ENCODE measurements at regions of chr11 and their contacts with region 1.

Region 1: GRCh38 chr11:46977038-46977813 is 40.7 kb downstream of the CSTPP1 start:
- DNase-seq: no peak
- H3K4me3 ChIP-seq: no peak overlapping the region
- H3K27ac ChIP-seq: no peak overlapping the region
- H3K4me1 ChIP-seq: peaks cover 13% of the 10 kb centered on the region
- CTCF ChIP-seq: no peak

Region 2: GRCh38 chr11:46966773-46967172 is 10.5 kb before region 1 on chr11:
- CTCF ChIA-PET with region 1: no interaction called
- POLR2A ChIA-PET with region 1: interaction called, 15 read pairs
- intact Hi-C with region 1: no loop called
- DNase-seq: no peak
- H3K4me3 ChIP-seq: no peak overlapping the region
- H3K27ac ChIP-seq: no peak overlapping the region
- H3K4me1 ChIP-seq: no peaks in the 10 kb centered on the region
- CTCF ChIP-seq: no peak

Region 3: DNA sequence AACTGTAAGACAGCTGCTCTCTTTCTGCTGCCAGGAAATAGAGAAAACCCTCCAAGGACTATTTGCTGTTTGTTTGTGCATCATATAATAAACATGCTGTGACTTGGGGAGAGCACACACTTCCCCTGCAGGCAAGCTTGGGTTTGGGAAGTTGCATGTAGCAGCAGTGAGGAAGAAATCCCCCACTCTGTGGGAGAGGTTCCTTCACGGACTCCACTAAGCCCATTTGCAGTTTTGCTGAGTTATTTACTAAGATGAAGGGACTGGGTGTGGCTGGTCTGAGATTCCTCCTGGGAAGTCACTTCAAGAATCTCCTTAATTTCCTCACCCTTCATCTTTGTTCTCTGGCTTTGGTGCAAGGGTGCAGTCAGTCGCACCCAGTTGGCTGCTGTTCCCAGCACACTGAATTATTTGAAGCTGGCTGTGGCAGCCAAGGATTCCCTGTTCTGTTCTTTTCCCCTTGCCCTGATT is 94.6 kb after region 1 on chr11:
- CTCF ChIA-PET with region 1: no interaction called
- POLR2A ChIA-PET with region 1: no interaction called
- intact Hi-C with region 1: no loop called
- DNase-seq: no peak
- H3K4me3 ChIP-seq: no peak overlapping the region
- H3K27ac ChIP-seq: no peak overlapping the region
- H3K4me1 ChIP-seq: no peaks in the 10 kb centered on the region
- CTCF ChIP-seq: no peak

Measured in OCI-LY7 (cell line).